Right cardiac atrium (tissue), 5 donors: ENCODE measurements at regions of chr11 and their contacts with region 1.

Region 1: GRCh38 chr11:75582895-75583717 is 21.1 kb downstream of the SERPINH1 start:
- DNase-seq: peak; percentile 76 to 89 (median 88)
- ATAC-seq: peak; percentile 73 to 91
- H3K4me3 ChIP-seq: peak overlapping the region; percentile 70
- H3K27ac ChIP-seq: peak overlapping the region; percentile 94
- H3K4me1 ChIP-seq: peaks cover 3% of the 10 kb centered on the region
- H3K27me3 ChIP-seq: no peaks in the 10 kb centered on the region

Region 2: GRCh38 chr11:75547580-75548058 is 35.5 kb before region 1 on chr11:
- intact Hi-C with region 1: loop called in 1 of 4 experiments (anchors 5 kb)
- DNase-seq: peak; percentile 71 to 90 (median 86)
- ATAC-seq: peak; percentile 86 to 87
- H3K4me3 ChIP-seq: no peak overlapping the region
- H3K27ac ChIP-seq: no peak overlapping the region
- H3K4me1 ChIP-seq: no peaks in the 10 kb centered on the region
- H3K27me3 ChIP-seq: no peaks in the 10 kb centered on the region

Region 3: GRCh38 chr11:75667831-75668450 is 84.8 kb after region 1 on chr11:
- intact Hi-C with region 1: loop called in 1 of 4 experiments (anchors 5 kb)
- DNase-seq: peak; percentile 61 to 86 (median 85)
- ATAC-seq: peak; percentile 52 to 64
- H3K4me3 ChIP-seq: peak overlapping the region; percentile 52
- H3K27ac ChIP-seq: no peak overlapping the region
- H3K4me1 ChIP-seq: peaks cover 2% of the 10 kb centered on the region
- H3K27me3 ChIP-seq: no peaks in the 10 kb centered on the region